Transverse colon (tissue), 4 donors: ENCODE measurements at regions of chr15 and their contacts with region 1.

Region 1: GRCh38 chr15:61011576-61012336 is 217.3 kb downstream of the RORA start:
- DNase-seq: no peak
- H3K4me3 ChIP-seq: no peak overlapping the region
- H3K27ac ChIP-seq: no peak overlapping the region
- H3K4me1 ChIP-seq: no peaks in the 10 kb centered on the region
- H3K27me3 ChIP-seq: no peaks in the 10 kb centered on the region
- CTCF ChIP-seq: no peak
- EP300 ChIP-seq: no peak
- POLR2A ChIP-seq: no peak

Region 2: DNA sequence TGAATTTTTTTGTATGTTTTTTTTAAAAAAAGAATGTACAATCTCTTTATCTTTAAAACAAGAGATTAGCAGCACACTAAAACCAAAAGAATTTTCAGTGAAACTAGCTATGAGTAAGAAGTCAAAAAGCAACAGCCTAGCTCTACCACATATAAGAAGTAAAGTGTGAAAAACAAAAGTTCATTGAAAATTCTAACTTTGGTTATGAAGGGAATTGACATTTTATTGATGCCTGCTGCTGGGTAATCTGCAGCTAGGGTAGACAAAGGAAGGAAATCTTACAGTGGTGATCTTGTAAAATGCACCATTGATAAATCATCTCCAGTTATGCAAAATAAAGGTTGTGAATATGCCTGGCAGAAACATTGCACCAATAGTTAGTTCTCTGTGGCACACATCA is 1045.5 kb before region 1 on chr15:
- in situ Hi-C with region 1: no loop called
- intact Hi-C with region 1: no loop called
- DNase-seq: no peak
- H3K4me3 ChIP-seq: no peak overlapping the region
- H3K27ac ChIP-seq: no peak overlapping the region
- H3K4me1 ChIP-seq: no peaks in the 10 kb centered on the region
- H3K27me3 ChIP-seq: no peaks in the 10 kb centered on the region
- CTCF ChIP-seq: no peak
- EP300 ChIP-seq: no peak
- POLR2A ChIP-seq: no peak

Region 3: DNA sequence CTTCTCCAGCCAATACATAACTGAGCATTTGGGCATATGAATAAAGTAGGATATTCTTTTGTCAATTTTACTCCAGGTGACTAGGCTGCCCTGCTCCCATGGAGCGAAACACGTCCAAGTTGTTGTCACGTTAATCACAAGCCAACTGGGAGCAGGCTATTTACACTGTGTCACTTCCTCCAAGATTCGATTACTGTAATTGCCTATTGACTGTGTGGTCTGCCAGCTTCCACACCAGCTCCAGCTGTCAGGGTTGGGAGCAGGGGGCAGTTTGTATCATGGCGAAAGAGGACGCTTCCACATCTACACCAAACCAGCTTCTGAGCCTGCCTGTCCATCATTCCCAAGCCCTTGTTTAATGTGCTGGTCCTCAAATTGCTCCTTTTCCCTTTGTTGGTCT is 306.5 kb after region 1 on chr15:
- in situ Hi-C with region 1: no loop called
- intact Hi-C with region 1: loop called (anchors 10 kb)
- DNase-seq: no peak
- H3K4me3 ChIP-seq: no peak overlapping the region
- H3K27ac ChIP-seq: no peak overlapping the region
- H3K4me1 ChIP-seq: no peaks in the 10 kb centered on the region
- H3K27me3 ChIP-seq: no peaks in the 10 kb centered on the region
- CTCF ChIP-seq: no peak
- EP300 ChIP-seq: no peak
- POLR2A ChIP-seq: no peak